ENCODE measurements at regions of chr13 and their contacts with region 1.

Region 1: DNA sequence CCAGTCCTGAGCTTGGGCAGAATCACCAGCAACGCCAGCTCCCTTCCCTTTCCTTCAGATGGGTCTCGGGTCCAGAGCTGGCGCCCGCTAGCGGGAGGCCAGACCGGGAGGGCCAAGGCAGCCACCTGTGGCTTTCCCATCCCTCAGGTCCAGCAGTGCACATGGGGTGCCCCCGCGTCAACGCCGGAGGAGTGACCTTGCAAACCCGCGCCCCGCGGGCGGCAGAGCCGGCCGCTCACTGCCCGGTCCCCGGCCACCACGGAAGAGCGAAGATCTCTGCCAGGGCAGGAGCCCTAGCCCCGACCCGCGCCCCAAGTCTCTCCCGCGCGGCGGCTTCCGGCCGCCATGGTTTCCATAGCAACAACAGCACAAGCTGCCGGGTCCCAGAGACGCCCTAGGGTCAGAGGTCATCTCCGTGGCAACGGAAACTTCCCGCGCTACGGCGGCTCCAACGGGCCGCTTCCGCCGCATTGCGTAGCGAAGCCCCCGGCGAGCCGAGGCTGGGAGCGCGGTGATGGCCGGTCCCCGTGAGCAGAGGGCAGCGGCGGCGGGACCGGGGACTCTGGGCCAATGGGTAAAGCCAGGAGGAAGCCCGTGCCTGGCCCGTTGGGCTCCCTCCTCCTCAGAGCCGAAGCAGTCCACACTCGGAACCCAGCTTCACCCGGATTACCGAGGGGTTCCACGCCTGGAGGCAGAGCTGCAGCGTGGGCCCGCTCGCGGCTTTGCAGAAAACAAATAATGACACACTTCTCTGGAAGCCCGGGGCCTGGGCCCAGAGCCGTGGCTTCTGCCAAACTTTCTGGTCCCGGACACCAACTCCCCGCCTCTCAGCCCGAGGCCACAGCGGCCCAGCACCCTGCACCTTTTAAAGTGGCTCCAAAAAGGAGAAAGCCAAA is 7.4 kb downstream of the FGF14 start:
- DNase-seq: peak; percentile 94
- H3K4me3 Mint-ChIP-seq: peak overlapping the region; percentile 86
- H3K27ac Mint-ChIP-seq: peak overlapping the region; percentile 84
- H3K4me1 Mint-ChIP-seq: peaks cover 26% of the 10 kb centered on the region
- H3K27me3 Mint-ChIP-seq: peaks cover 17% of the 10 kb centered on the region

Region 2: GRCh38 chr13:102347490-102347889 is 46.9 kb before region 1 on chr13:
- intact Hi-C with region 1: no loop called
- DNase-seq: no peak
- H3K4me3 Mint-ChIP-seq: no peak overlapping the region
- H3K27ac Mint-ChIP-seq: no peak overlapping the region
- H3K4me1 Mint-ChIP-seq: no peaks in the 10 kb centered on the region
- H3K27me3 Mint-ChIP-seq: peaks cover 5% of the 10 kb centered on the region

Region 3: GRCh38 chr13:102536695-102537485 is 142.5 kb after region 1 on chr13:
- intact Hi-C with region 1: loop called (anchors 5 kb)
- DNase-seq: no peak
- H3K4me3 Mint-ChIP-seq: no peak overlapping the region
- H3K27ac Mint-ChIP-seq: no peak overlapping the region
- H3K4me1 Mint-ChIP-seq: peaks cover 10% of the 10 kb centered on the region
- H3K27me3 Mint-ChIP-seq: peaks cover 3% of the 10 kb centered on the region

Region 4: DNA sequence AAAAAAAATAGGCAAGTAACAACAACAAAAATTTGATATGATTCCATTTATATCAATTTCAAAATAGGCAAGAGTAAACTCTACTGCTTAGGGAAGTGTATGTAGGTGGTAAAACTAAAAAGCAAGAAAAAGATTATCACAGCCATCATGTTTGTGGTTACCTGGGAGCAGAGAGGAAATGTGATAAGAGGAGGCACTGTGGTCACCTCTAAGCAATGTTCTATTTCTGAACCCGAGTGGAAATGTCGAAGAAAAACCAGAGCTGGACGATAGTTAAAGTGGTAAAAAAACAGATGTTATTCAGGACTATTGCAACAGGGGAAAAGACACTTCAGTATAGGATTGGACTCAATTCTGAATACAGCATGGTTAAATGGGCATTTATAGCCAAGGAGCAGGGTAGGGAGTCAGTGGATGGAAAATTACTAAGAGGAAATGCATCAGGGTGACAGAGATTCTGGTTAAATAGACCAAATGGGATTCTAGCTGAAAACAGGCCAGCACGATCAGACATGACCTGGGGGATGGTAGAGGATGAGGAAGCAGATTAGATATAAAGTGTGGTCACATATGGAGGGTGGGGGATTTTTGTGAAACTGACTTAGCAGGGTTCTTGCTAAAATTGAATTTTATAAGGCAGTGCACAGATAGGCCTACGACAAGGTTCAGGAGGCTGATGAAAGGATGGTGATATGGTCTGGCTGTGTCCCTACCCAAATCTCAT is 385.2 kb after region 1 on chr13:
- intact Hi-C with region 1: loop called (anchors 2 kb)
- DNase-seq: peak; percentile 55
- H3K4me3 Mint-ChIP-seq: peak overlapping the region; percentile 50
- H3K27ac Mint-ChIP-seq: peak overlapping the region; percentile 98
- H3K4me1 Mint-ChIP-seq: peaks cover 36% of the 10 kb centered on the region
- H3K27me3 Mint-ChIP-seq: no peaks in the 10 kb centered on the region

Region 5: DNA sequence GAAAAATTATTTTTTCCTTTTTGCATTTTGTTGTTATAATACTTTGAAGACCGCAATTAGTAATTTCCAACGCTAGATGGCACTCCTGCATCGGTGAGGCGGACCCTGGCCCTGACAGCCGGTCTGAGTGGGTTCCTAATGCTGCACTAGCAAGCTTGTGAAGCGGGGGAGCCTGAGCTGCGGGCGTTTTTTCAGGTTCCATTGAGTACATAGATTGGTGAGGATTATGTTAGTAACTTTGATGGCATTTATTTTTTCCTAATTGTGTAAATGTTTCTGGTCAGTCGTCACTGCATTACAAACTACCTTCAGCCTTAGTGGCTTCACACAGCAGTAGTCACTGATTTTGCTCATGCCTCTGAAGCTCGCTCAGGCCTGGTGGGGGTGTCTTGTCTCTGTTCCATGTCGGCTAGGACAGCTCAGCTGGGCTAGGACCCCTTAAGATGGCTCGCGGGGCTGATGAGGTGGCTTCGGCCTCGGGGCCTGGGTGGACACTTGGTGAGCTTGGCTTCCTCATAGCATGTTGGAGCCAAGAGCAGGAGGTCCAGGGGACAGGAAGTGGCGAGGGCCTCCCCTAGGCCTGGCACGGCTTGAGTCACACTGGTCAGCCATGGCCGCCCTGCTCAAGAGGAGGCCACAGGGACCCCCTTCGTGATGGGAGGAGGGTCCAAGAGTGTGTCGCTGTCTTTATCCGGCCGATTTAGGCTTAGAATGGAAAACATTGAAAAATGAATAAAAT is 476.4 kb after region 1 on chr13:
- intact Hi-C with region 1: loop called (anchors 2 kb)
- DNase-seq: no peak
- H3K4me3 Mint-ChIP-seq: no peak overlapping the region
- H3K27ac Mint-ChIP-seq: peak overlapping the region; percentile 35
- H3K4me1 Mint-ChIP-seq: peaks cover 33% of the 10 kb centered on the region
- H3K27me3 Mint-ChIP-seq: no peaks in the 10 kb centered on the region